ENCODE measurements at regions of chr7 and their contacts with region 1.

Region 1: GRCh38 chr7:786472-787255 is 45.6 kb upstream of the SUN1 start:
- DNase-seq: peak; percentile 92

Region 2: DNA sequence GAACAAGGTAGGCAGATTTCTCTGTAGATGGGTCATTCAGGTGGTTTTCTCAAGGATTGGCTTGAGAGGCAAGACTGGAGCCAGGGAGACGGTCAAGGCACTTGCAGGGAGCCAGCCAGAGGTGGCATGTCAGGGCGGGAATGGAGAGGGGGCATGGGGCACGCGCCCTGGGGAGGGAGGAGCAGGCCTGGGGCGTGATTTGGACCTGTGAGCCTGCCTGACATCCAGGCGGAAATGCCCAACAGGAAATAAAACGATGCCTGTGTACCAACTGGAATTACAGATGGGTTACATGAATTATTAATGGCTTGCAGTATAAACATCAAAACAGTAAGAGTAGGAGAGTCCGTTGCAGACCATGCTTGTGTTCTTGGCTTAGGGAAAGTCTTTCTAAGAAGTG is 37.0 kb after region 1 on chr7:
- intact Hi-C with region 1: loop called in 1 of 2 experiments (anchors 5 kb)
- DNase-seq: peak; percentile 46

Region 3: DNA sequence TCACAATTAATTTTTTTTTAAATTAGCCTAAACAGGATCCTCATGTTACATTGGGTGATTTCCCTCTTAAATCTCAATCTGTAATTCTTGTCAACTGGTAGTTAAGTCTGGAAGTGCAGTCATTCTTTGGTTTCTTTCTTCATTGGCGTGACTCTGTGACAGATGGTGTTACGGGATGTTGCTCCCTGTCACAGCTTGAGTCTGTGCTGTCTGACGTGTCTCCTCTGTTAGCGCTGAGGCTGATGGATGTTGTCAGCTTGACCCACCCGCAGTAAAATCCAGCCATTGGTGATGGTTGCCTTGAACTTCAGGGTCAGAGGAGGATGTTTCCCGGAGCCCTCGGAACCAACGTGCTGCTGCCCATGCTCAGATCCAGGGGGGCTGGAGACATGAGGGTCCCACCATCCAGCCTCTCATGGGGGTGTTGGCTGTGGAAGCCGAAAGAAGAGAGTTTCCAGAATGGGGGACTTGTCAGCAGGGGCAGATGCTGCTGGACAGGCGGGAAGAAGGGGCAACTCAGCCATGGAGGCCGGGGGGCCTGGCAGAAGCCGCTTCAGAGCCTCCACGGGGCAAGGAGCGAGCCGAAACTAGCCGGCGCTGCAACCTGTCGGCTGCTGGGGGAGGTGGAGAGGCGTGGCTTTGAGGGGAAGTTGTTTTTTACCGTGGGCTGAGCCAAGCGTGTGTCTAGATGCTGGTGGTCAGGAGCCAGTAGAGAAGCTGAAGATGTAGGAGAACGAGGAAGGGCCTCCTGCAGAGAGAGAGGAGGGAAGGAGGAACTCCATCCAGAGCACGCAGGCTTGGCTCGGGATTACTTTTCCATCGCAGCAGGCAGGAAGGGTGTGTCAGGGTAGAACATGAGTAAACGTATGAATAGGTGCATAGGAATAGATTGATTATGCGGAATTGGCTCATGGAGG is 49.1 kb after region 1 on chr7:
- intact Hi-C with region 1: loop called in 1 of 2 experiments (anchors 2 kb)
- DNase-seq: no peak

Region 4: DNA sequence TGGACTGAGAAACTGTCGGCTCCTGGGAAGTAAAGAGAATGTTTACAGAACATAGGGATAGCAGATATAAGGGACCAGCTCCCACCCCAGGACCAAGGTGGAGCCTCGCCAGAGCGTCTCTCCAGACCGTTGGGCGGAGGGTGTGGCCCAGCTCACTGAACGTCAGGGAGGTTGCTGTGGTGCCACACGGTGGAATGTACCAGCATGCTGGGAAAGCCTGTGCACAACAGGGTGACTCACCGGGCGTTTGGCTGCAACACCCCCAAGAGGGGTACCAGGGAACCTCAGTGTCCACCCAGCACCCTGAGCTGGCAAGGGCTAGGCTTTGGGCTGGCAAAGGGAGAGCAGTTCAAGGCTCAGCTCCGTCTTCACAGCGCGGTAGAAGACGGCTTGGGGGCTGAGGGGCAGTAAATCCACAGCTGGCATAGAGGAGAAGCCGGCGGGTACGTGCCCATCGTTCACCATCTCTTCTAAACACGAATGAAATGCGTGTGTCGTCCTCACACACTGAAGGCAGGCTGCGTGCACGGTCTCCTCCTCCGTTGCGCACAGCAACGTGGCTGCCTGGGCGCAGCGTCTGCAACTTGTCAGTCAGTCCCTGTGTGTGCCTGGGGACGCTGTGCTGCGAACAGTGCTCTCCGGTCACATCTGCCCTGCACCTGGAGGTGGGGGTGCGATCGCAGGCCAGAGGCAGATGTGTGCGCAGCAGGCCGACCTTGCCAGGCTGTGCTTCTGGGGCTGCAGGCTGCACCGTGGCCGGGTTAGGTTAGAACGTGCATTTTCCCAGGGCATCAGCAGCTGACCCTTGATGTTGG is 81.2 kb after region 1 on chr7:
- intact Hi-C with region 1: loop called (anchors 5 kb)
- DNase-seq: no peak

Region 5: DNA sequence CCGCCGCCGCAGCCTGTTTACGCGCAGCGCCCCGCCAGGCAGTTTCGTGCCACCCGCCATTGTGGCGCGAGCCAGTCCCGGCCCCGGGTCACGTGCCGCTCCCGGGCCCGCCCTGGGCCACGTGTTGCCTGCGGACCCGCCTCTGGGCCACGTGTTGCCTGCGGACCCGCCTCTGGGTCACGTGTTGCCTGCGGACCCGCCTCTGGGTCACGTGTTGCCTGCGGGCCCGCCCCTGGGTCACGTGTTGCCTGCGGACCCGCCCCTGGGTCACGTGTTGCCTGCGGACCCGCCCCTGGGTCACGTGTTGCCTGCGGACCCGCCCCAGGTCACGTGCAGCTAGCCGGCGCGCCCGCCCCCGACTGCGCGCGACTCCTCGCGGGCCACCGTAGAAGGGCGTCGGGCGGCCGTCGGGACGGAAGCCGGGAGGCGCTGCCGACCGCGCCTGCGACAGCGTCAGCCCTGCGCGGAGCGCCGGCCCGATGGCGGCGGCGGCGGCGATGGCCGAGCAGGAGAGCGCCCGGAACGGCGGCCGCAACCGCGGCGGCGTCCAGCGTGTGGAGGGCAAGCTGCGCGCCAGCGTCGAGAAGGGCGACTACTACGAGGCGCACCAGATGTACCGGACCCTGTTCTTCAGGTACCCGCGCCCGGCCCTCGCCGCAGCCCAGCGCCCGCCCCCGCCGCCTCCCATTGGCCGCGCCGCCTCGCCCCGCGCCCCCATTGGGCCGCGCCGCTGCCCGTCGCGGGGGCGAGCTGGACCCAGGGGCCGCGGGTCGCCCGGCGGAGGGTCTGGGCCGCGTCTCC is 89.7 kb after region 1 on chr7 and contains the start of gene GET4:
- intact Hi-C with region 1: loop called in 1 of 2 experiments (anchors 5 kb)
- DNase-seq: peak; percentile 99
- total RNA-seq, gene GET4: 13.2 to 16.3 TPM

Region 6: DNA sequence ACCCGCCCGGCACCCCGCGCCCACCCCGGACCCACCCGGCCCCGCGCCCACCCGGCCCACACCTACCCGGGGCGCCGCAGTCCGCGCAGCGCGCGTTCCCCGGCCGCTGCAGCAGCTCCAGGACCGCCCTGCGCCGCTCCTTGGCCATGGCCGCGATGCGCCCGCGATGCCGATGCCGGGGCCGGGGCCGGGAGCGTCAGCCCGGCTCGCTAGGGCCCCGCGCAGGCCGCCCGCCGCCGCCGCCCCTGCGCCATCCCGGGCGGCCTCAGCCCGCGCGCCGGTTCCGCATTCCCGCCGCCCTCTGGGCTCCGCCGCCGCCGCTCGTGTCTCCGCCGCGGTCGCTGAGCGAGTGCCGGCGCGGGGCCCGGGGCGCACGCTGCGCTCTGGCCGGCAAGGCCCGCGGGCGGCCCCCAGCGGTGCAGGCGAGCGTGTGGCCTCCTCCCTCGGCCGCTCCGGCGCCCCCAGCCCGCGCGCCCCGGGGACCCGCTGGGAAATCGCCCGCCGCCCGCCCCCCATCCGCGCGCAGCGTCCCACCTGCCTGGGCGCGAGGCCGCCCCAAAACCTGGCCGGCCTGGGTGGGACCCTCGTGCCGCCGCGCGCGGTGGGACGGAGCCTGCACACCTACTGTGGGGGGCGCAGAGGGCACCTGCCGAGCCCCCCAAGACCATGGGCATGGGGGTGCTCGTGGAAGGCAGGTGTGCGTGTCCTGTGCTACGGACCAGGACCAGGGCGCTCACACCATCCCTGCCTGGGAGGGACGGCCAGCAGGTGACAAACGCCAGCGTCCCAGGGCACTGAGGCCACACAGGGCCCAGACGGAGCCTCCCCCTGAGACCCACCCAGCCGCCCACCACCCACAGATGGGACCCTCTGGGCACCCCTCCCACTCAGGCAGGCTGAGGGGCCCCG is 167.9 kb after region 1 on chr7 and contains the start of gene ADAP1:
- intact Hi-C with region 1: loop called in 1 of 2 experiments (anchors 10 kb)
- DNase-seq: peak; percentile 85
- total RNA-seq, gene ADAP1: 16.3 to 17.8 TPM

Measured in posterior vena cava (tissue), 2 donors.